ENCODE measurements at regions of chr5 and their contacts with region 1.

Region 1: DNA sequence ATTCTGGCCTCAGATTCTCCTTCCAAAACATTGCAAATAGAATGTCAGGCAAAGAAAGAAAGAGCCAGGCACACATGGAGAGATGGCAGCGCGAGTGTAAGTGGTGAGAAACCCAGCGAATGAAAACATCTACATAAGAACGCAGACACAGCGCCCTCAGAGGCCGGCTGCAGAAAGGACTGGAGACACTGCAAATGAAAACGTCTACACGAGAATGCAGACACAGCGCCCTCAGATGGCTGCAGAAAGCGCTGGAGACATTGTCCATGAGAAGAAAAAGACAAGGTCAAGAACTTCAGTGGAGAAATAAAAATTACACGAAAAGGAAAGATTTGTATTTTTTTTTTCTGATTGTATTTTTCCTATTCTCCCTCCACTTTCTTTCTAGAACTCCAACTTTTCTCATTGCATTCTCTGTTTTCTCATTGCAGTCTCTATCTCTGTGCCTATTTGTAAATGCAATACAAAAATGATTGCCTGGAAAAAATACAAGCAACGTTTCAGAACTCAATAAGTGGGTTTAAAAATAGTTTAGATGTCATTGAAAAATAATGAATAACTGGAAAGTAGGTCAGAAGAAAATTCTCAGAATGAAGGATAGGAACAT is 117.9 kb upstream of the LPCAT1 start:
- DNase-seq: peak; percentile 71
- H3K4me3 Mint-ChIP-seq: no peak overlapping the region
- H3K27ac Mint-ChIP-seq: no peak overlapping the region
- H3K4me1 Mint-ChIP-seq: peaks cover 8% of the 10 kb centered on the region
- H3K27me3 Mint-ChIP-seq: peaks cover 35% of the 10 kb centered on the region

Region 2: GRCh38 chr5:923281-923873 is 718.3 kb before region 1 on chr5:
- intact Hi-C with region 1: loop called (anchors 10 kb)
- DNase-seq: peak; percentile 64
- H3K4me3 Mint-ChIP-seq: no peak overlapping the region
- H3K27ac Mint-ChIP-seq: no peak overlapping the region
- H3K4me1 Mint-ChIP-seq: peaks cover 6% of the 10 kb centered on the region
- H3K27me3 Mint-ChIP-seq: peaks cover 24% of the 10 kb centered on the region

Region 3: DNA sequence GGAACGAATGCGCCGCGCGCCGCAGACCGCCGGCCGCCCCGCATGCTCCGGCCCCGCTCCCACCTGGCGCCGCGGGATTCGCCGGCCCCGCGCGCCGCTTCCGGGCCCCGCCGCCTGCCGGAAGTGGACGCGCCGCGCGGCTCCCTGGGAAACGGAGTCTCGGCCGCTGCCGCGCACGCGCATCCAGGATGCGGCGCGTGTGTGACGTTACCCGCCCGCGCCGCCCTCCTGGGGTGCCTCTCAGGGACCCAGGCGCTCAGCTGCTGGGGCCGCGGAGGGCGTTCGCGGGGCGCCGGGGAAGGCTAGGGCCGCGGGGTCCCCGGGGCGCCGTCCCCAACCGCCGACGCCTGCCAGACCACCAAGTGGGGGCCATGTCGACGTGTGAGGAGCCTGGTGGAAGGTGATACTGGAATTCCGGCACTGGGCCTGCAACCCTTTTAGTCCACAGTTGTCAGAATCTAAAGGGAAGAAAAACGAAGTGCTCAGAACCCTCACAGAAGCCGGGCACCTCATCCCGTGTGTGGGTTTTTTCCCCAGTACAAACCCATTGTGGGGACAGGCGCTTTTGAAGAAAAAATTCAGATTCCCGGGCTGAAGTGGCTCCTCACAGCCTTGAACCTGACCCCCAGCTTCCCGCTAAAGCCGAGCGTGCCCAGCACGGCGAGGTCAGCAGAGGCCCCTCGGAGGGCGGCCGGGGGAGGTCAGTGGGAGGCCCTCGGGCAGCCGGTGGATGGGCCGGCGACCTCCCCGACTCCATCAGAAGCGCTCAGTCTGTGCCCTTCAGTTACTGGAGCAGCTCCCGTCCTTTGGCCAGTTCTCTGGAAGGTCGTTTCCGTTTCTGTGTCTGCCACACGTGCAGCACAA is 296.5 kb before region 1 on chr5 and contains the start of gene CLPTM1L:
- intact Hi-C with region 1: loop called (anchors 2 kb)
- DNase-seq: peak; percentile 87
- H3K4me3 Mint-ChIP-seq: peak within 1 kb of the TSS; percentile 90
- H3K27ac Mint-ChIP-seq: peak within 1 kb of the TSS; percentile 89
- H3K4me1 Mint-ChIP-seq: peaks cover 29% of the 10 kb centered on the region
- H3K27me3 Mint-ChIP-seq: no peaks in the 10 kb centered on the region
- total RNA-seq, gene CLPTM1L: 132 and 133 TPM in 2 replicates

Region 4: DNA sequence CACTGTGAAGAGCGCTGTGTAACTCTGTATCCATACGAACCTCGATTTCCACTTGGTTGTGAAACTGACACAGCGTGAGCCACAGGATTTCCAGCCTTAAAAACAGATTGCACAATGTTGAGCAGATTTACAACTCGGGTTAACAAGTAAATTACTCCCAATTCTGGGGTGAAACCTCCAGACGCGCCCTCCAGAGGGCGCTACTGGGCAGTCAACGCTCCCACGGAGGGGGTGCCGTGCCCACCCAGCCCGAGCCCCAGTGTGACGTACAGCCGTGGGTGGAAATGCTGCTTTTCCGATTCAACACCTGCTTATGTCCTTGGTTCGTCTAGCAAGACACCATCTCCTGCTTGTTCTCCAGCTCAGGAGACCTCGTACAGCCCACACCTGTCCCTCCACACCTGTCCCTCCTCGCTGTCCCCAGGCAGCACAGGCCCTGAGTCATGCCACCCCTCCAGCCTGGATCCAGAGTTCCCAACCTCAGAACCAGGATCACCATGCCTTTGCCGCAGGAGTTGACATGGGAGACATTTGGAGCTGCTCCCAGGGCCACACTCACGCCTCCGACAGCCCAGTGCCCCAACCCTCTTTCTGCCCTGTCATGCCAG is 162.0 kb before region 1 on chr5:
- intact Hi-C with region 1: loop called (anchors 1 kb)
- DNase-seq: no peak
- H3K4me3 Mint-ChIP-seq: no peak overlapping the region
- H3K27ac Mint-ChIP-seq: no peak overlapping the region
- H3K4me1 Mint-ChIP-seq: no peaks in the 10 kb centered on the region
- H3K27me3 Mint-ChIP-seq: no peaks in the 10 kb centered on the region

Region 5: DNA sequence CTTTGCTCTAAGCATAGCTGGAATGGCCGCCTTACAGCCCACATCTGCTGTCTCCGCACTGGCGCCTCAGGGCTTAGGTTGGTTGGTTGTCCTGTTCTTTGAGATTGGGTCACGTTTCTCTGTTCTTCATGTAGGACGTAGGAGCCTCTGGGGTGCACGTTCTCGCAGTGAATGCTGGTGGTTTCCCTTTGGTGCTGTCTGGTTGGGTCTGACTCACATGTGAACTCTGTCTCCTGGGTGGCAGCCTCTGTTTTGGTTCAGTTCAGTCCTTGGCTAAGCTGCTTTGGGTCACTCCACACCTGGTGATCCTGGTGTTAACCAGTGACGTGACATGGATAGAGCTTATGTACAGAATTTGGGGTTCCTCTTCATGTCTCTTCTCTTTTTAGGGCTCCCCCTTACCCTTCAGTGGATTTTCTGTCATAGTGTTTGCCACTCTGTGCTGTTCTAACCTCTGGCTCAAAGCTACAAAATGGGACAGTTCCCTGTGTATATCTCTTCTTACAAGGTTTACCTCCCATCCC is 105.3 kb before region 1 on chr5:
- intact Hi-C with region 1: loop called (anchors 2 kb)
- DNase-seq: peak; percentile 50
- H3K4me3 Mint-ChIP-seq: peak overlapping the region; percentile 71
- H3K27ac Mint-ChIP-seq: peak overlapping the region; percentile 79
- H3K4me1 Mint-ChIP-seq: peaks cover 20% of the 10 kb centered on the region
- H3K27me3 Mint-ChIP-seq: peaks cover 25% of the 10 kb centered on the region